ENCODE measurements at regions of chr1 and their contacts with region 1.

Region 1: GRCh38 chr1:160193091-160193819 is 2.9 kb downstream of the CASQ1 start:
- DNase-seq: peak; percentile 81 to 90 (median 84)
- ATAC-seq: peak; percentile 92
- H3K4me3 ChIP-seq: no peak overlapping the region
- H3K27ac ChIP-seq: peak overlapping the region; percentile 22; the same call in 2 of the 3 replicates
- H3K4me1 ChIP-seq: peaks cover 4 to 10% of the 10 kb centered on the region in 2 experiments
- H3K27me3 ChIP-seq: peaks cover 16 to 38% of the 10 kb centered on the region in 2 experiments; a peak in 4 of 5 replicates
- CTCF ChIP-seq: peak; percentile 93 to 96 (median 95)
- EP300 ChIP-seq: no peak
- POLR2A ChIP-seq: no peak
- RAD21 ChIP-seq: peak; percentile 92 to 95

Region 2: GRCh38 chr1:159274631-159275030 is 918.6 kb before region 1 on chr1:
- CTCF ChIA-PET with region 1: no interaction called
- POLR2A ChIA-PET with region 1: no interaction called
- in situ Hi-C with region 1: no loop called
- intact Hi-C with region 1: no loop called
- DNase-seq: no peak
- ATAC-seq: no peak
- H3K4me3 ChIP-seq: no peak overlapping the region
- H3K27ac ChIP-seq: no peak overlapping the region
- H3K4me1 ChIP-seq: no peaks in the 10 kb centered on the region
- H3K27me3 ChIP-seq: no peaks in the 10 kb centered on the region
- CTCF ChIP-seq: no peak
- EP300 ChIP-seq: no peak
- POLR2A ChIP-seq: no peak
- RAD21 ChIP-seq: no peak

Region 3: DNA sequence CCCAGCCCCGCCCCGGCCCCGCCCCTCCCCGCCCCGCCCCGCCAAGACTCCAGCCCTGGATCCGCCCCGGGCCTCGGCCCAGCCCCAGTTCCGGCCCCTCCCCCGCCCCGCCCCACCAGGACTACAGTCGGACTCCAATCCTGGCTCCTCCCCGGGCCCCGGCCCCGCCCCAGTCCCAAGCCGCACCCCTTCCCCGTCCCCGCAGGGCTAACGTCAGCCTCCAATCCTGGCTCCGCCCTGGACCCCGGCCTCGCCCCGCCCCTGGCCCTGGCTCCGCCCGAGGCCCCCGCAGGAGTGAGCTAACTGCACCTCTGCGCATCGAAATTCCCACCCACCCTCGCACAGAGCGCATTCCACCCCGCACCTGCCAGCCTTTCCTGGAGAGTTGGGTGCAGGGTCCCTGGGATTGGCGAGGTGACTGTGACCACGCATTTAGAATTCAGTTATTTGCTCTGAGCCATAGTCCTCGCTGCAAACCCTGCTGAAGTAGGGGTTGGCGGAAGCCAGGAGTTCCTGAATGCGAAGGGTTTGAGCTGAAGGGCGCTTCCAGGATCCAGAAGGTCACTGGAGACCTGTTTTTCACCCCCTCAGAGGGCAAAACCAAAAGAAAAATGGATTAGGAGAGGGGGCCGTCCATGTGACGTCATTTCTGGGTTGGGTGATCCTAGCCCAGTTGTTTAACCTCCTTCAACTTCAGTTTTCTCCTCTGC is 94.2 kb before region 1 on chr1:
- CTCF ChIA-PET with region 1: no interaction called
- POLR2A ChIA-PET with region 1: no interaction called
- in situ Hi-C with region 1: no loop called
- intact Hi-C with region 1: loop called (anchors 2 kb)
- DNase-seq: peak; percentile 95 to 99 (median 98)
- ATAC-seq: peak; percentile 96
- H3K4me3 ChIP-seq: peak overlapping the region; percentile 45
- H3K27ac ChIP-seq: peak overlapping the region; percentile 71
- H3K4me1 ChIP-seq: peaks cover 18 to 35% of the 10 kb centered on the region in 2 experiments; a peak in 4 of 5 replicates
- H3K27me3 ChIP-seq: no peaks in the 10 kb centered on the region
- CTCF ChIP-seq: no peak
- EP300 ChIP-seq: no peak
- POLR2A ChIP-seq: no peak
- RAD21 ChIP-seq: no peak

Region 4: GRCh38 chr1:160209321-160210046 is 16.2 kb after region 1 on chr1:
- CTCF ChIA-PET with region 1: no interaction called
- POLR2A ChIA-PET with region 1: interaction called, 10 read pairs
- in situ Hi-C with region 1: no loop called
- intact Hi-C with region 1: no loop called
- DNase-seq: no peak
- ATAC-seq: no peak
- H3K4me3 ChIP-seq: no peak overlapping the region
- H3K27ac ChIP-seq: no peak overlapping the region
- H3K4me1 ChIP-seq: peaks cover 23 to 24% of the 10 kb centered on the region in 2 experiments
- H3K27me3 ChIP-seq: no peaks in the 10 kb centered on the region
- CTCF ChIP-seq: no peak
- EP300 ChIP-seq: no peak
- POLR2A ChIP-seq: no peak; the same call in 1 of the 2 replicates
- RAD21 ChIP-seq: no peak

Region 5: DNA sequence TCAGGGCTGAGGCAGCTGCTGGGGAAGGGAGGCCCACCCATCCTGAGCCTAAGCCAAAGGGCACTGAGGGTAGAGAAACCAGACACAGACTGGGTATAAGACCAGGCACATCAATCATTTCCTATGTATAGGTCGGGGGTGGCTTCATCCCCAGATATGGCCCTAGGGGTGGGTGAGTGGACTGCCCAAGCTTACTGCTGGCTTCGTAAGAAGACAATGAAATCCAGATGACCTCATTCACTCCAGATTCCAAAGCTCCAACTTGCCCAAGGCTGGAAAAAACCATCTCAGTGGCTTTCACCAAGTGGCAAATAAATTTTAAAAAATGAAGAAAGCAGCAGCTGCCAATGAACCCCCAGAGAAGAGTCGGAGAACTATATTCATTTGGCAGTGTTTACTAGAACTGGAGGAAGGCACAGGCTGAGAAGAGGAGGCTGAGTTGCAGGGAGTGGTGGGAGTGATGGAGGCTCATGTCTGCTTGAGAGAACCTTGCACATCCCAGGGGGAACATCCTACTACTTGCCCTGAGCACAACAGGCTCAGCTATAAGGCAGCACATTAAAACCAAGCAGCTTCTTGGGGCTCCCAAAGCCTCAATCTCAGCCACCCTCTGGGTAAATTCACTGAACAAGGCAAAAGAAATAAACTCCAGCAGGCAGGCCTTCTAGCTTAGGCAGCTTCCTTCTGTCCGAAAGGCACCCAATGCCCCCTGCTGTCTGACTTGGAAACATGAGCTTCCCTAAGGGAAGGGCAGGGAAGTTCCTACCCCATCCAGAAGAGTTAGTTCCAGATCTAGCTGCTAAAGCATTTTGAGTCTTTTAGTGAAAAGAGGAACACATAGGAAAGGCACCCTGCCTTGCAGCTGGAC is 26.0 kb after region 1 on chr1:
- CTCF ChIA-PET with region 1: interaction called, 13 read pairs
- POLR2A ChIA-PET with region 1: interaction called, 9 read pairs
- in situ Hi-C with region 1: no loop called
- intact Hi-C with region 1: no loop called
- DNase-seq: peak in 1 of 4 experiments; percentile 28
- ATAC-seq: 0 out of 3 replicates have a peak, but pooled peaks have one; percentile 34
- H3K4me3 ChIP-seq: no peak overlapping the region
- H3K27ac ChIP-seq: no peak overlapping the region
- H3K4me1 ChIP-seq: no peaks in the 10 kb centered on the region
- H3K27me3 ChIP-seq: no peaks in the 10 kb centered on the region
- CTCF ChIP-seq: peak; percentile 22 to 40 (median 37); a peak in 3 of 6 replicates
- EP300 ChIP-seq: no peak
- POLR2A ChIP-seq: no peak
- RAD21 ChIP-seq: peak; percentile 30 to 52; a peak in 3 of 4 replicates

Region 6: DNA sequence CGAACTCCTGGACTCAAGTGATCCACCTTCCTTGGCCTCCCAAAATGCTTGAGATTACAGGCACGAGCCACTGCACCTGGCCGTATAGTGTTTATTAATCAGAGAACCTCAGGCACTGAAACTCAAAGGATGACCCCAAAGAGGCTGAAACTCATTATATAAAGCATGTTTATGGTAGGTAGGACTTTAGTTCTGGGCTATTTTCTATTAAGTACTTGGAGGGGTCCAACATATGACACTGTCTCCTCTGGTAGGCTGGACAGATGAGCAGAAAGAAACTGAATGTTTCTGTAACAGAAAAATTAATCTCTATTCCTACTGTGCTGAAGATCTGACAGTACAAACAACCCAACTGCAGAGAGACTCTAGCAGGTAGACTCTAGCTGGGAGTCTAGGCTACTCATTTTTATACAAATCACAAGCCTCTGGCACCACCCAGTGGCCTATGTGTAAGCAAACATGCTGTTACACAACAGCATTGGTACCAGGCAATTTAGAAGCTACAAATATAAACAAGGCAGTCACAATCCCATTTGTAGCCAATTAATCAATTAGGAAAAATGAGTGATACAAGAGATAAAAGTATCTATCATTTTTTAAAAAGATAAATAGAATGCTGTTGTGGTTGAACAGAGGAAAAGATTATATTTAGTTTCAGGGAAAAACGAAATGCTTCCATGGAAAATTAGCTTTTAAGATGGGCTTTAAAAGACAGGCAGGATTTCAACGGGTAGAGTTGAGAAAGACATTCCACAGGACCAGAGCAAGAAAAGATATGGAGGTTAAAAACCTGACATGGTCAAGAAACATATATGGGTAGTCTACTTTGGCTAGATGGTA is 58.7 kb after region 1 on chr1:
- CTCF ChIA-PET with region 1: interaction called, 8 read pairs
- POLR2A ChIA-PET with region 1: no interaction called
- in situ Hi-C with region 1: no loop called
- intact Hi-C with region 1: loop called (anchors 1 kb)
- DNase-seq: peak; percentile 57 to 72 (median 65)
- ATAC-seq: peak; percentile 96
- H3K4me3 ChIP-seq: no peak overlapping the region
- H3K27ac ChIP-seq: no peak overlapping the region
- H3K4me1 ChIP-seq: no peaks in the 10 kb centered on the region; a peak in 1 of 5 replicates
- H3K27me3 ChIP-seq: no peaks in the 10 kb centered on the region
- CTCF ChIP-seq: peak; percentile 67 to 81 (median 74)
- EP300 ChIP-seq: no peak
- POLR2A ChIP-seq: no peak
- RAD21 ChIP-seq: peak; percentile 78 to 80

Region 7: GRCh38 chr1:160291248-160292220 is 98.3 kb after region 1 on chr1:
- CTCF ChIA-PET with region 1: interaction called, 10 read pairs
- POLR2A ChIA-PET with region 1: interaction called, 3 read pairs
- in situ Hi-C with region 1: no loop called
- intact Hi-C with region 1: loop called (anchors 1 kb)
- DNase-seq: peak; percentile 56 to 72 (median 68)
- ATAC-seq: peak; percentile 93
- H3K4me3 ChIP-seq: no peak overlapping the region
- H3K27ac ChIP-seq: no peak overlapping the region
- H3K4me1 ChIP-seq: no peaks in the 10 kb centered on the region
- H3K27me3 ChIP-seq: no peaks in the 10 kb centered on the region
- CTCF ChIP-seq: peak; percentile 76 to 77 (median 76)
- EP300 ChIP-seq: no peak
- POLR2A ChIP-seq: no peak
- RAD21 ChIP-seq: peak in 1 of 2 experiments; percentile 60; a peak in 3 of 4 replicates

Region 8: GRCh38 chr1:160607011-160607671 is 413.9 kb after region 1 on chr1:
- CTCF ChIA-PET with region 1: no interaction called
- POLR2A ChIA-PET with region 1: no interaction called
- in situ Hi-C with region 1: no loop called
- intact Hi-C with region 1: loop called (anchors 10 kb)
- DNase-seq: peak; percentile 71 to 86 (median 74)
- ATAC-seq: peak; percentile 97
- H3K4me3 ChIP-seq: no peak overlapping the region
- H3K27ac ChIP-seq: no peak overlapping the region
- H3K4me1 ChIP-seq: peaks cover 0 to 22% of the 10 kb centered on the region in 2 experiments; a peak in 2 of 5 replicates
- H3K27me3 ChIP-seq: no peaks in the 10 kb centered on the region
- CTCF ChIP-seq: peak; percentile 80 to 95 (median 84)
- EP300 ChIP-seq: 0 out of 2 replicates have a peak, but pooled peaks have one; percentile 40
- POLR2A ChIP-seq: no peak
- RAD21 ChIP-seq: peak; percentile 99 to 100

Measured in K562 (cell line).